Left ventricle myocardium superior (tissue), 1 donor: ENCODE measurements at regions of chr2 and their contacts with region 1.

Region 1: DNA sequence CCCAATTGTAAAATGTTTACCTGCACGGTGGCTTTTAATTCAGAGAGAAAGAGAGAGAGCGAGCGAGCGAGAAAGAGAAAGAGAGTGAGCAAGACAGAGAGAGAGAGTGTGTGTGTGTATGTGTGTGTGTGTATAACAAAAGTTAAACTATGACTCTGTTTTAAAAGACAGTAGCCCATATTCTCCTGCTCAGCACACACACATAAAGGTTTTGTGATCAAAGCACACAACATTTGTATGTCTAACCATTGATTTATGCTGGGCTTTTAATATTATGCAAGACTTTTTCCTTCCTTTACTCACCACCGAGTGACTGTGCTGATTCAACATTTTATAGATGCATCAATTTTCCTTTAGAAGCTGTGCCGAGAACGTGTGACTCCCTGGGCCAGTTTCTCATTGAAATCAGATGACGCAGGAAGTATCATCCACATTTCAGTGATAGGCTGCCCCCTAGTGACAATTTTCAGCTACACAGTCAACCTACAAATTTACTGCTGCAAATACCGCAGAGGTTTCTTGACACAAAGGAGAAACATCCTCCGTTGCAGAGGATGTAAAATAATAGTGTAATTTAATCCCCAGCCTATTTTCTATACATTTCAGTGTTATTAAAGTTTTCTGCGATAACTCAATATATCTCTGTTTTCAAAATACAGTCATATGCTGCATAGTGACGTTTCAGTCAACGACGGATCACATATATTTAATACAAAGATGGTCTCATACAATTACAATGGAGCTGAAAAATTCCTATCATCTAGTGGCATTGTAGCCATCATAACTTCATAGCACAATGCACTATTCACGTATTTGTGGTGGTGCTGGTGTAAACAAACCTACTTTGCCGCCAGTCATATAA is 165.9 kb upstream of the TANK start:
- DNase-seq: peak; percentile 31
- ATAC-seq: peak; percentile 91

Region 2: DNA sequence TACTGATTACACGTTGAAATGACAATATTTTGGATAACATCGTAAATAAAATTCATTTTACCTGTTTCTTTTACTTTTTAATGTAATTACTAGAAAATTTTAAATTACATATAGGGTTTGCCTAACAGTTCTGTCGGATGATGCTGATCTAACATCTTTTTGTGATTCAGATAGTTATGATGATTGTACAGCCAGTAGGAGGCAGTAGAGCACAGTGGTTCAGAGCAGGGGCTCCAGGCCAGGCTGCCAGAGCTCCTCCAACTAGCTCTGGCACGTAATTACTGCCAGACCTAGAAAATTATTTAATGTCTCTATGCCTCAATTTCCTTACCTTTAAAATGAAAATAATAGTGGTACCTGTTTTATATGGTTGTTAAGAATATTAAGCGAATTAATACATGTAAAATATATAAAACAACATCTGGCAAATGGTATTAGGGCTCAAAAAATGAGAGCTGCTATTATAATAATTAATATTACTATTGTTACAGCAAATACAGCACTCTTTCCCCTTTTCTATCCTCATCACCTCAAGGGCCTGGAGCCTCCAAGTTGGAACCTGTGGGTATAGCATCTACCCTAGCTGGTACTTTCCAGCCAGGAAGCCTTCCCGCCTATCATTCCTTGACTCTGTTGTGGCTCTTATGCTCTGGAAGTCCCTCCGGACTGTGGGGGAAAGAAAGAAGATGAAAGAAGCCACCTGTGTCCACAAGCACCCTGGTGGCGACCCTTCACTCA is 884.3 kb before region 1 on chr2:
- intact Hi-C with region 1: loop called (anchors 5 kb)
- DNase-seq: peak; percentile 74
- ATAC-seq: peak; percentile 87